ENCODE measurements at regions of chr10 and their contacts with region 1.

Region 1: GRCh38 chr10:26423722-26424121 is 14.4 kb upstream of the APBB1IP start:
- DNase-seq: no peak
- ATAC-seq: no peak
- H3K4me3 ChIP-seq: no peak overlapping the region
- H3K27ac ChIP-seq: no peak overlapping the region
- H3K4me1 ChIP-seq: no peaks in the 10 kb centered on the region
- H3K27me3 ChIP-seq: no peaks in the 10 kb centered on the region
- CTCF ChIP-seq: no peak

Region 2: GRCh38 chr10:26372513-26373354 is 51.0 kb before region 1 on chr10:
- intact Hi-C with region 1: loop called in 1 of 10 experiments (anchors 10 kb)
- DNase-seq: no peak
- ATAC-seq: no peak
- H3K4me3 ChIP-seq: no peak overlapping the region
- H3K27ac ChIP-seq: no peak overlapping the region
- H3K4me1 ChIP-seq: peaks cover 0 to 23% (median 0%) of the 10 kb centered on the region in 9 donors
- H3K27me3 ChIP-seq: peaks cover 0 to 6% (median 0%) of the 10 kb centered on the region in 7 donors
- CTCF ChIP-seq: no peak

Region 3: GRCh38 chr10:26503911-26504310 is 80.2 kb after region 1 on chr10:
- intact Hi-C with region 1: no loop called
- DNase-seq: no peak
- ATAC-seq: no peak
- H3K4me3 ChIP-seq: no peak overlapping the region
- H3K27ac ChIP-seq: no peak overlapping the region
- H3K4me1 ChIP-seq: peaks cover 0 to 9% (median 0%) of the 10 kb centered on the region in 9 donors
- H3K27me3 ChIP-seq: no peaks in the 10 kb centered on the region
- CTCF ChIP-seq: peak in 1 of 9 donors; percentile 7

Region 4: GRCh38 chr10:26612151-26612915 is 188.6 kb after region 1 on chr10:
- intact Hi-C with region 1: no loop called
- DNase-seq: no peak
- ATAC-seq: no peak
- H3K4me3 ChIP-seq: no peak overlapping the region
- H3K27ac ChIP-seq: no peak overlapping the region
- H3K4me1 ChIP-seq: no peaks in the 10 kb centered on the region
- H3K27me3 ChIP-seq: peaks cover 0 to 12% (median 0%) of the 10 kb centered on the region in 7 donors
- CTCF ChIP-seq: no peak

Measured in heart right ventricle (tissue), 16 donors.